Head of caudate nucleus (tissue), 42 donors: ENCODE measurements at regions of chr7 and their contacts with region 1.

Region 1: DNA sequence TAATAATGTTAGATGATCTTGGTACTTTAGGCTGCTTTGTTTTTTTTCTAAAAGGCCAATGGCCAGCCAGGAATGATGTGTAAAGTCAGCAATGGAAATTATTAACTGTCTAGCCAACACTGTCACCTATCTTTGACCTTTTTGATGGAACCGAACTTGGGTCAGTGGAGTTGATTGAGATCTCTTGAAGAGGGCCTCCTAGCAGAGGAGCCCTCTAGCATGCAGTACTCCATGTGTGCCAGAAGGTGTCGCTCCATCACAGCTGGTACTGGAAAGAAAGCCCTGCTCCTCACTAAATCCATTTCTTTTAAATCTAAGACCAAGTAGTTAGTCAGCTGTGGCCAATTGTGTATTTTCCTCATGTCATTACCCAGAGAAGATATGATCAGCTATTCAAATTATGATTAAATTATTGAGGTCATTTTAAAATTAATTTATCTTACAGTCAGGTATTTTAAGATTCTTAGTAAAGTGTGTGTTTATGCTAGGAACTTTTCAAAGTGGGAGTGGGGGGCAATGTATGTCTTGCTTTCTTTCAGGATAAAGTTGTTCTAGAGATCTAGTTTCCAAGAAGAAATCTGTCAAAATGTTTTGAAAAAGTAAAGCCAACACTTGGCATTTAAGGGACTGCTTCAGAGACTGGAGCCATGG is 33.1 kb upstream of the CROT start:
- DNase-seq: peak; percentile 10 to 89 (median 68)

Region 2: GRCh38 chr7:87416682-87417587 is 104.6 kb after region 1 on chr7:
- intact Hi-C with region 1: loop called (anchors 5 kb)
- DNase-seq: peak in 38 of 42 donors; percentile 18 to 91 (median 66)